Activated CD4-positive, alpha-beta memory T cell treated with anti-CD3 and anti-CD28 coated beads for 36 hours (primary cell): ENCODE measurements at regions of chr3 and their contacts with region 1.

Region 1: GRCh38 chr3:62188681-62189383 is 184.5 kb downstream of the FEZF2 start:
- DNase-seq: peak; percentile 73
- H3K4me3 Mint-ChIP-seq: no peak overlapping the region
- H3K27ac Mint-ChIP-seq: no peak overlapping the region
- H3K4me1 Mint-ChIP-seq: peaks cover 4% of the 10 kb centered on the region
- H3K27me3 Mint-ChIP-seq: peaks cover 5% of the 10 kb centered on the region

Region 2: DNA sequence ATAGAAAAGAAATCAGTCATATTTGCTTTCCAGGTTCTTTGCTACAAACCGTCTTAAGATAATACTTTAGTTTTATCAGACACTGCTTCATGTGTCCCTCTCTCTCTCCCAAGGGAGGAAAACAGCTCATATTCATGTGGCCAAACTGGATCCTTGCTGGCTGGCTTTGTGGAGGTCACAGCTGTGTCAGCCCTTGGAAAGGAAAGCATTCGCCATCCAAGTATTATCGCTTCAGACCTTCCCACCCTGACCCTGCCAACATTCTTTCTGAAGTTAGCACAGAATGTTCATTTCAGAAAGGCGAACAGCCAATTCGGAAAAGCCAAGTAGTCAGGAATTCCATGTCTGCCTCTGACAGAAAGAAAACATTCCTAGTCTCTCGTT is 29.1 kb before region 1 on chr3:
- CTCF ChIA-PET with region 1: no interaction called
- POLR2A ChIA-PET with region 1: no interaction called
- intact Hi-C with region 1: no loop called
- DNase-seq: no peak
- H3K4me3 Mint-ChIP-seq: no peak overlapping the region
- H3K27ac Mint-ChIP-seq: no peak overlapping the region
- H3K4me1 Mint-ChIP-seq: no peaks in the 10 kb centered on the region
- H3K27me3 Mint-ChIP-seq: no peaks in the 10 kb centered on the region

Region 3: GRCh38 chr3:62201438-62202035 is 12.7 kb after region 1 on chr3:
- CTCF ChIA-PET with region 1: interaction called, 34 read pairs
- POLR2A ChIA-PET with region 1: no interaction called
- intact Hi-C with region 1: no loop called
- DNase-seq: no peak
- H3K4me3 Mint-ChIP-seq: no peak overlapping the region
- H3K27ac Mint-ChIP-seq: no peak overlapping the region
- H3K4me1 Mint-ChIP-seq: no peaks in the 10 kb centered on the region
- H3K27me3 Mint-ChIP-seq: peaks cover 2% of the 10 kb centered on the region